GM12878 (cell line): ENCODE measurements at regions of chr5 and their contacts with region 1.

Region 1: DNA sequence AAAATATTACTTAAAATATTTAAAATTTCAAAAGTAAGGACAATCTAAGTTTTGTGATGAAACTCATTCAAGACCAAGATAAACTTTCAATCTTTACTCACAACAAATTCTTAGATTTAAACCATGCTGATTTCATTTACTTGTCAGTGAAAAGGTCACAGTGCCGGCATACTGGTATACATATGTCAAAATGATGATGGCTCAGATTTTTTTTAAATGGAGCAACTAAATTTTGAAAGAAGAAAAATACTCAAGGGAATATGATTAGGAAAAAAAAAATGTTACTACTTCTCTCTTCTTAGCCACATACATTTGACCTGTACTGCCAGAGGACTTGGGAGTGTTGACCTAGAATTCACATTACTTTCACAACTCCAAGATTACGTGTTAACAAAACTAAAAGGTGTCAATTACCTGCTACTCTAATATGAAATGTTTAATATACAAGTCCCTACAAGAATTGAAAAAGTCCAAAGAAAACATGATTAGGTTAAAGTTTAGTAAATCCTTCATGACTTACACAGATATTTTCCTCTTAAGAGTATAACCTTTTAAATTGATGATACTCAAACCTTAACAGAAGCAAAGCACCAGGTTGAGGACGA is 4.6 kb downstream of the EFNA5 start:
- DNase-seq: no peak
- ATAC-seq: no peak
- H3K4me3 ChIP-seq: peak overlapping the region; percentile 34; the same call in 1 of the 2 replicates
- H3K27ac ChIP-seq: no peak overlapping the region
- H3K4me1 ChIP-seq: peaks cover 1% of the 10 kb centered on the region
- H3K27me3 ChIP-seq: peaks cover 0 to 2% of the 10 kb centered on the region in 2 experiments; a peak in 3 of 4 replicates
- CTCF ChIP-seq: no peak
- EP300 ChIP-seq: no peak
- POLR2A ChIP-seq: no peak
- RAD21 ChIP-seq: no peak

Region 2: GRCh38 chr5:107424491-107424890 is 241.7 kb before region 1 on chr5:
- CTCF ChIA-PET with region 1: no interaction called
- POLR2A ChIA-PET with region 1: no interaction called
- RAD21 ChIA-PET with region 1: no interaction called
- SMC1A ChIA-PET with region 1: no interaction called
- in situ Hi-C with region 1: no loop called
- intact Hi-C with region 1: no loop called
- DNase-seq: no peak
- ATAC-seq: no peak
- H3K4me3 ChIP-seq: no peak overlapping the region
- H3K27ac ChIP-seq: no peak overlapping the region
- H3K4me1 ChIP-seq: no peaks in the 10 kb centered on the region
- H3K27me3 ChIP-seq: no peaks in the 10 kb centered on the region; a peak in 1 of 4 replicates
- CTCF ChIP-seq: no peak
- EP300 ChIP-seq: no peak
- POLR2A ChIP-seq: no peak
- RAD21 ChIP-seq: no peak

Region 3: DNA sequence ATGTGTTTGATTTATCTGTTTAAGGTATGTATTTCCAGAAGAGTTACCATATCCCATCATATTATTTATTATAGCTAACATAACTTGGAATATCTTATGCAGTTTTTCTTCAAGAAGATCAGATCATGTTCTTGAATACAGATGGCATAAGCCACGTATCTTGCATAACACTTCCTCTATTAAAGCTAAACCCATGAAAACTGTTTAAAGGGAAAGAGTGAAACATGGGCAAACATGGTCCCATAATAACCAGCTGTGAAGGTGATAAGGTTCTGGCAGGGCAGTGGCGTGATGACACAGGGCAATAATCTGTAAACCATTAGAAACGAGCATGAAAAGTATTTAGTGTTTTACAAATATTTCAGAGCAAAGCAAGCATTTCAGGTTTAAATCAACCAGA is 29.6 kb before region 1 on chr5:
- CTCF ChIA-PET with region 1: no interaction called
- POLR2A ChIA-PET with region 1: interaction called, 4 read pairs
- RAD21 ChIA-PET with region 1: interaction called, 3 read pairs
- SMC1A ChIA-PET with region 1: interaction called, 12 read pairs
- in situ Hi-C with region 1: no loop called
- intact Hi-C with region 1: no loop called
- DNase-seq: no peak
- ATAC-seq: no peak
- H3K4me3 ChIP-seq: no peak overlapping the region
- H3K27ac ChIP-seq: no peak overlapping the region
- H3K4me1 ChIP-seq: no peaks in the 10 kb centered on the region
- H3K27me3 ChIP-seq: no peaks in the 10 kb centered on the region; a peak in 1 of 4 replicates
- CTCF ChIP-seq: no peak
- EP300 ChIP-seq: no peak
- POLR2A ChIP-seq: no peak
- RAD21 ChIP-seq: no peak

Region 4: GRCh38 chr5:107652839-107653607 is 13.1 kb before region 1 on chr5:
- CTCF ChIA-PET with region 1: interaction called, 3 read pairs
- POLR2A ChIA-PET with region 1: interaction called, 5 read pairs
- RAD21 ChIA-PET with region 1: interaction called, 9 read pairs
- SMC1A ChIA-PET with region 1: interaction called, 12 read pairs
- in situ Hi-C with region 1: no loop called
- intact Hi-C with region 1: no loop called
- DNase-seq: no peak
- ATAC-seq: peak; percentile 57
- H3K4me3 ChIP-seq: peak overlapping the region; percentile 25; the same call in 1 of the 2 replicates
- H3K27ac ChIP-seq: no peak overlapping the region
- H3K4me1 ChIP-seq: no peaks in the 10 kb centered on the region
- H3K27me3 ChIP-seq: no peaks in the 10 kb centered on the region; a peak in 1 of 4 replicates
- CTCF ChIP-seq: no peak
- EP300 ChIP-seq: no peak
- POLR2A ChIP-seq: no peak
- RAD21 ChIP-seq: no peak